ENCODE measurements at regions of chr15 and their contacts with region 1.

Region 1: GRCh38 chr15:65832549-65833364 is 36.5 kb upstream of the RAB11A start:
- DNase-seq: peak; percentile 73
- H3K4me3 Mint-ChIP-seq: peak overlapping the region; percentile 40
- H3K27ac Mint-ChIP-seq: peak overlapping the region; percentile 81
- H3K4me1 Mint-ChIP-seq: peaks cover 45% of the 10 kb centered on the region
- H3K27me3 Mint-ChIP-seq: no peaks in the 10 kb centered on the region

Region 2: DNA sequence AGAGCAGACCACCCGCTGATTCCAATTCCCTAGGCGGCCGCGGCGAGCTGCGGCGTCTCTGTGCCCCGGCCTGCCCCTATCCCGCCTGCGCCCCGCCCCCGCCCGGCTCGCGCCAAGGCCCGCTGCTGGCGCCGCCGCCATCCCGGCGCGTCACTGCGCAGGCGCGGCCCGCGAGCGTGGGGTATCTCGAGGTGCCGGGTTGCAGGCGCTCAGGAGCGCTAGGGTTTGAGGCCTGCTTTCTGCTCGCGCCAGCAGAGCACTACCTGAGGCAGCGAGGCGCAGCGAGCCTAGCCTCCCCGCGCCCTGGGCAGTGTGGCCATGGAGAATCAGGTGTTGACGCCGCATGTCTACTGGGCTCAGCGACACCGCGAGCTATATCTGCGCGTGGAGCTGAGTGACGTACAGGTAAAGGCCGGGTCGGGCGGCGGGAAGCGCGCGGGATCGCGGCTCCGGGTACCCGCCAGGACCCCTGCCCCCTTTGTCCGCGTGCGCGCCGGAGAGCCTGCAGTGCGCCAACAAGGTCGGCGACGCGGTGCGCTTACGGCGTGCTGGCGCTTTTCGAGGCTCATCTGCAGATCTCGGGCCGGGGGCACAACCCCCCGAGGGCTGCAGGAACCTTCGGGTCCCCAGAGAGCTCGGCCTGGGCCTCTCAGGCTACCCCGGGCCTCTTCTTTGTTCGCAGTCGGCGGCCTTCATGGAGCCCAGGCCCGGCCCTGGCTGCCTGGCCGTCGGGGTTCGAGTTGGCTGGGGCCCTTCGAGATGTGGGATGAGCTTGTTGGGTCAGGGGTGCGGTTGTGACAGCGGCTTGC is 302.2 kb before region 1 on chr15 and contains the start of gene HACD3:
- CTCF ChIA-PET with region 1: no interaction called
- intact Hi-C with region 1: no loop called
- DNase-seq: peak; percentile 89
- H3K4me3 Mint-ChIP-seq: peak within 1 kb of the TSS; percentile 83
- H3K27ac Mint-ChIP-seq: peak within 1 kb of the TSS; percentile 69
- H3K4me1 Mint-ChIP-seq: peaks cover 32% of the 10 kb centered on the region
- H3K27me3 Mint-ChIP-seq: no peaks in the 10 kb centered on the region
- total RNA-seq, gene HACD3: 29.1 to 30.1 TPM

Region 3: DNA sequence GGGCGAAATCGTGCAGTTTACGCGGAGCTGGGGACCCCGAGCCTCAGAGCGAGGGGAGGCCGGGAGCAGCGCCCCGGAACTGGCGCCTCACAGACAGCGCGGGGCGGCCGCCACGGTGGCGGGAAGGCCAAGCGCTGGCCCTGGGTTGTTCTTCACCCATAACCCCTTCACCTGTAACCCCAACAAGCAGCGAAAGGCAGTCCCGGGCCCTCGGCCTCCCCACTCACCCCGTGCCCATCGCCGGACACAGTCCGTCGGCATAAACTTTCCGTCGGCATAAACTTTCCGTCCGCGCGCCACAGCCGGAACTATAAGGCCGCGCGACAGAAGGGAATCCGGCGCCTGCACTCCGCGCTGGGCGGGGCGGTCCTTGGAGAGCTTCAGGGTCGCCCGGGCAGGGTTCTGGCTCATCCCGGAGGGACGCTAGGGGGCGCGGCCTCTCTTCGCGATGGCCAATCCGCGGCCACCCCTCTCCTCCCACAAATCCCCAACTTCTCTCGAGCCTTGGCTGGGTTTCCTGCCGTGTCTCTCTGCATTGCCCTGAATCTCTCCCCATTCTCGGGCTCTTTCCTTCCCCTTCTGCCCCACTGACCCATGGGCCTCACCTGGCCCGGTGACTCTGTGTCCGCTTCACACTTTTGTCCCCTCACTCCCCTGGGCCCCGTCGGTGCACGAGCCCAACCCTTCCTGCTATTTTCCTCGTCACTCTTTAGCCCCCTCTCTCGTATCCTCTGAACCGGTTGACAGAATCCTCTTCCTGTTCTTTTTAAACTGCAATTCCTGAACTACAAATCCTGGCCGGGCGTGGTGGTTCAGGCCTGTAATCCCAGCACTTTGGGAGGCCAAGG is 221.7 kb before region 1 on chr15 and contains the start of gene INTS14:
- CTCF ChIA-PET with region 1: interaction called, 3 read pairs
- intact Hi-C with region 1: loop called (anchors 1 kb)
- DNase-seq: peak; percentile 98
- H3K4me3 Mint-ChIP-seq: peak within 1 kb of the TSS; percentile 98
- H3K27ac Mint-ChIP-seq: peak within 1 kb of the TSS; percentile 96
- H3K4me1 Mint-ChIP-seq: peaks cover 45% of the 10 kb centered on the region
- H3K27me3 Mint-ChIP-seq: no peaks in the 10 kb centered on the region
- total RNA-seq, gene INTS14: 41.2 to 43.4 TPM

Region 4: GRCh38 chr15:65638681-65639089 is 194.1 kb before region 1 on chr15:
- CTCF ChIA-PET with region 1: interaction called, 43 read pairs
- intact Hi-C with region 1: loop called (anchors 1 kb)
- DNase-seq: peak; percentile 53
- H3K4me3 Mint-ChIP-seq: no peak overlapping the region
- H3K27ac Mint-ChIP-seq: no peak overlapping the region
- H3K4me1 Mint-ChIP-seq: peaks cover 8% of the 10 kb centered on the region
- H3K27me3 Mint-ChIP-seq: no peaks in the 10 kb centered on the region

Region 5: GRCh38 chr15:65747265-65747664 is 85.5 kb before region 1 on chr15:
- CTCF ChIA-PET with region 1: no interaction called
- intact Hi-C with region 1: no loop called
- DNase-seq: no peak
- H3K4me3 Mint-ChIP-seq: no peak overlapping the region
- H3K27ac Mint-ChIP-seq: no peak overlapping the region
- H3K4me1 Mint-ChIP-seq: no peaks in the 10 kb centered on the region
- H3K27me3 Mint-ChIP-seq: no peaks in the 10 kb centered on the region

Region 6: GRCh38 chr15:65773386-65774111 is 59.2 kb before region 1 on chr15:
- CTCF ChIA-PET with region 1: interaction called, 5 read pairs
- intact Hi-C with region 1: loop called (anchors 1 kb)
- DNase-seq: peak; percentile 35
- H3K4me3 Mint-ChIP-seq: no peak overlapping the region
- H3K27ac Mint-ChIP-seq: peak overlapping the region; percentile 42
- H3K4me1 Mint-ChIP-seq: peaks cover 40% of the 10 kb centered on the region
- H3K27me3 Mint-ChIP-seq: no peaks in the 10 kb centered on the region

Region 7: DNA sequence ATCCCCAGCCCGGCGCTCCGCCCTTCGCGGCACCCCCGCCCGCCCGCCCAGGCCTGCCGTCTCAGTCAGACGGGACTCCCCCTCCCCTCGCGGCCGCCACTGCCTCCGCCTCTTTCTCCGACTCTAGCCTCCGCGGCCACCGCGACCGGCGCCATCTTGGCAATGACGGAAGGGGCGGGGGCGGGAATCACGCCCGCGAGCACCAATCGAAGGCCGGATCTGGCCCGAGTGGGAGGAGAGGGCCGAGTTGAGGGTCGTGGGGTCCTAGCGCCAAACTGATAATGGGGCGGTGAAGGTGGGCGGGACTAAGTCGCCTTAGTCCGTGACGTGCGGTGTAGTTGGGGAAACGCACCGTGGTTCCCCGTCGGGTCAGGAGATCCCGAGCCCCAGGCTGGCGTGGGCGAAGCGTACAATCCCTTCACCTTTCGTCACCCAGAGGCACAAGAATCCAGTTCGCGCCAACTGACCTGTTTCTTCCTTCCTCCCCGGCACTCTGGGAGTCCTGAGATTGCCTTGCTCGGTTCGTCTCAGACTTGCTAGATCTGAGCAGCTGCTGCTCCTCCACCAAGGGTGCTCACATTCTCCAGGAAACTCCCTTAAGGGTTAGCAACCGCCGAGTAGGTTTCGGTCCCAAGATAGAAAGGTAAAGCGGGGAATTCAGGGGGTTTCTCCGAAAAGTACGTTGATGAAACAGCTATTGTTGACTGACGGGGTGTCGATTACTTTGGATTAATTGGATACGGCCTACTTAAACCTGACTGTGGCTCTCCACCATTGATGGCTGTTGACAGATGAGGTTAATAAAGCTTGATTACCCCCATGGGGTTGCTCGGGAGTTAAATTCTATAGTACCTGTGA is 40.4 kb before region 1 on chr15 and contains the start of gene DENND4A:
- CTCF ChIA-PET with region 1: interaction called, 10 read pairs
- intact Hi-C with region 1: loop called (anchors 1 kb)
- DNase-seq: peak; percentile 99
- H3K4me3 Mint-ChIP-seq: peak within 1 kb of the TSS; percentile 88
- H3K27ac Mint-ChIP-seq: peak within 1 kb of the TSS; percentile 98
- H3K4me1 Mint-ChIP-seq: peaks cover 58% of the 10 kb centered on the region
- H3K27me3 Mint-ChIP-seq: no peaks in the 10 kb centered on the region
- total RNA-seq, gene DENND4A: 23.9 to 24.9 TPM

Region 8: DNA sequence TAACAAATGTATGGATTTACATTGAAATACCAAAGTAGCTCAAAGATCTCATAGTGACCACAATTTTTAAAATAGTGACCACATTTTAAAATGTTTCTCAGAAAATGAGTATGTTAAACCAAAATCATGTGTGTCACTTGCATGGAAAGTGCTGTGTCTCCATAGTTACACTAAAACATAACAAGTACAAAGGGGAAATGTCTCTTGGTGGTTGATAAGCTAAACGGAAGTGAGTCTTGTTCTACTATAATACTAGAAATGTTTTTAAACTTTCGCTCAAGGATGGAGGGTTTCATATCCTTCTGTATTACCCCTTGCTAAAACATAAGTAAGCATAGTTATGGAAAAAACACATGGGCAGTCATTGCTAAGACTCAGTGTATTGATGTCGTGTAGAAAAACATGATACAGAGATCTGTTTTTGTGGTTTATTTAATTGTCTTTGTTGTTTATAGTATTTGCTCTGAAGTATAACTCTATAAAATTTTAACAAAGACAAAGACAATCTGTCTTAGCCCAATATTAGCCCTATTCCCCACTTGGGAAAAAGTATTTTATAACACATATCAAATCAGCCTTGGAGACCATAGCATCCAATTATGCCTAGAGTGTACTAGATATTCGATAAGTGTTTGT is 13.7 kb before region 1 on chr15:
- CTCF ChIA-PET with region 1: interaction called, 11 read pairs
- intact Hi-C with region 1: loop called (anchors 1 kb)
- DNase-seq: no peak
- H3K4me3 Mint-ChIP-seq: peak overlapping the region; percentile 22
- H3K27ac Mint-ChIP-seq: peak overlapping the region; percentile 59
- H3K4me1 Mint-ChIP-seq: peaks cover 47% of the 10 kb centered on the region
- H3K27me3 Mint-ChIP-seq: no peaks in the 10 kb centered on the region

Region 9: GRCh38 chr15:65856821-65857455 is 24.2 kb after region 1 on chr15:
- CTCF ChIA-PET with region 1: interaction called, 7 read pairs
- intact Hi-C with region 1: loop called (anchors 1 kb)
- DNase-seq: peak; percentile 91
- H3K4me3 Mint-ChIP-seq: no peak overlapping the region
- H3K27ac Mint-ChIP-seq: no peak overlapping the region
- H3K4me1 Mint-ChIP-seq: peaks cover 11% of the 10 kb centered on the region
- H3K27me3 Mint-ChIP-seq: no peaks in the 10 kb centered on the region

Measured in activated naive CD4-positive, alpha-beta T cell treated with anti-CD3 and anti-CD28 coated beads for 36 hours (primary cell).